ENCODE measurements at regions of chr5 and their contacts with region 1.

Region 1: GRCh38 chr5:127186657-127187056 is 103.9 kb upstream of the MEGF10 start:
- DNase-seq: no peak
- ATAC-seq: no peak
- H3K4me3 ChIP-seq: no peak overlapping the region
- H3K4me3 Mint-ChIP-seq: no peak overlapping the region
- H3K27ac ChIP-seq: no peak overlapping the region
- H3K27ac Mint-ChIP-seq: no peak overlapping the region
- H3K4me1 ChIP-seq: no peaks in the 10 kb centered on the region
- H3K4me1 Mint-ChIP-seq: peaks cover 0 to 4% (median 0%) of the 10 kb centered on the region in 7 donors
- H3K27me3 ChIP-seq: peaks cover 0 to 3% of the 10 kb centered on the region in 2 donors
- H3K27me3 Mint-ChIP-seq: peaks cover 0 to 12% (median 7%) of the 10 kb centered on the region in 5 donors

Region 2: DNA sequence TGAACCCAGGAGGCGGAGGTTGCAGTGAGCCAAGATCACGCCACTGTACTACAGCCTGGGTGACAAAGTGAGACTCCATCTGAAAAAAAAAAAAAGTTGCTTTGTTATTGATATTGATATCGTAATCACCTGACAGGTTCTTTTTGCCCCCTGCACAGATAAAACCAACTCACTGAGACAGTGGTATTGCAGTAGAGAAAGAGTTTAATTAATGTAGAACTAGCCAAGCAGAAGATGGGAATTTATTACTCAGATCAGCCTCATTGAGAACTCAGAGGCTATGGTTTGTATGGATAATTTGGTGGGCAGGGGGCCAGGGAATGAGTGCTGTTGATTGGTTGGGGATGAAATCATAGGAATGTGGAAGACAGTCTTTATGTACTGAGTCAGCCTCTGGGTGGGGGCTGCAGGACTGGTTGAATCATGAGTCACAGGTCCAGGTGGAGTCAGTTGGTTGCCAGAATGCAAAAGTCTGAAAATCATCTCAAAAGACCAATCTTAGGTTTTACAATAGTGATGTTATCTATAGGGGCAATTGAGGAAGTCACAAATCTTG is 68.2 kb after region 1 on chr5:
- CTCF ChIA-PET with region 1: no interaction called
- POLR2A ChIA-PET with region 1: no interaction called
- intact Hi-C with region 1: loop called in 1 of 2 experiments (anchors 5 kb)
- DNase-seq: no peak
- ATAC-seq: no peak
- H3K4me3 ChIP-seq: no peak overlapping the region
- H3K4me3 Mint-ChIP-seq: no peak overlapping the region
- H3K27ac ChIP-seq: no peak overlapping the region
- H3K27ac Mint-ChIP-seq: no peak overlapping the region
- H3K4me1 ChIP-seq: no peaks in the 10 kb centered on the region
- H3K4me1 Mint-ChIP-seq: no peaks in the 10 kb centered on the region
- H3K27me3 ChIP-seq: no peaks in the 10 kb centered on the region
- H3K27me3 Mint-ChIP-seq: peaks cover 0 to 16% (median 2%) of the 10 kb centered on the region in 5 donors

Region 3: GRCh38 chr5:127471211-127471610 is 284.6 kb after region 1 on chr5:
- CTCF ChIA-PET with region 1: no interaction called
- POLR2A ChIA-PET with region 1: no interaction called
- intact Hi-C with region 1: no loop called
- DNase-seq: no peak
- ATAC-seq: no peak
- H3K4me3 ChIP-seq: no peak overlapping the region
- H3K4me3 Mint-ChIP-seq: no peak overlapping the region
- H3K27ac ChIP-seq: no peak overlapping the region
- H3K27ac Mint-ChIP-seq: no peak overlapping the region
- H3K4me1 ChIP-seq: no peaks in the 10 kb centered on the region
- H3K4me1 Mint-ChIP-seq: peaks cover 0 to 1% (median 0%) of the 10 kb centered on the region in 7 donors
- H3K27me3 ChIP-seq: no peaks in the 10 kb centered on the region
- H3K27me3 Mint-ChIP-seq: peaks cover 11 to 33% (median 15%) of the 10 kb centered on the region in 5 donors

Measured in naive thymus-derived CD4-positive, alpha-beta T cell (primary cell).